ENCODE measurements at regions of chr2 and their contacts with region 1.

Region 1: DNA sequence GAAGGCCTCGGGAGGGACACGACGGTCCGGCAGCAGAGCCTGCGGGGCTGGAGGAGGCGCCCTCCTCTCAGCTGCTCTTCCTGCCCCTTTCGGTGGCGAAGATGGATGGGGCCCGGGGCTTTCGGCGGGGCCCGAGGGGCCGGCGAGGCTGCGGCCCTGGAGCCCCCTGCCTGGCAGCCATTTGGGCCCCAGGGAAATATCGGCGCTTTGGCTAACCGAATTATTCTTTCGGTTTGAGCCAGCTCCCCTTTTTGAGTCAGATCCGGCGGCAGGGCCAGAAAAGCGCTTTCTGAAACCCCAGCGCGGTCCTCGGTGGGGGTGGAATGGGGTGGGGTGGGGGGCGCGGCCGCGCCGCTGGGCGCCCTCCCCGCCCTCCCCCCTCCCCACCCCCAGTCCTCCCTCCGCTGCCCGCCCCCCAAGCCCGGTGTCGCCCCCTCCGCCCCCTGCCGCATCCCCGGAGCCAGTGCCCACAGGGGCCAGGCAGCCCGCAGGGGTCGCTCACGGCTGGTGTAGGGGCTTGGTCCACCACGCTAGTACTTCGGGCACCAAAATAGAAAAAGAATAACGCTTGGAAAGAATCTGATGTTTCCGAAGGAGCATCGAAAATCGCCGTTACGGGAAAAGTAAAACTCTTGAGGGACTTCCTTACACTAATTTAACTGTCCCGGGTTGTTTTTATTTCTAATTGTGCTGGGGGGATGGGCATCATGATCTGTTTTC is 9.1 kb upstream of the ARID5A start:
- DNase-seq: no peak
- ATAC-seq: peak; percentile 67
- H3K4me3 ChIP-seq: peak overlapping the region; percentile 39
- H3K27ac ChIP-seq: peak overlapping the region; percentile 97
- H3K4me1 ChIP-seq: peaks cover 88% of the 10 kb centered on the region
- H3K27me3 ChIP-seq: no peaks in the 10 kb centered on the region
- CTCF ChIP-seq: peak in 2 of 3 experiments; percentile 28 to 32; a peak in 3 of 6 replicates
- EP300 ChIP-seq: peak; percentile 65 to 70; a peak in 3 of 4 replicates
- POLR2A ChIP-seq: peak; percentile 73
- RAD21 ChIP-seq: peak; percentile 34; the same call in 1 of the 2 replicates

Region 2: DNA sequence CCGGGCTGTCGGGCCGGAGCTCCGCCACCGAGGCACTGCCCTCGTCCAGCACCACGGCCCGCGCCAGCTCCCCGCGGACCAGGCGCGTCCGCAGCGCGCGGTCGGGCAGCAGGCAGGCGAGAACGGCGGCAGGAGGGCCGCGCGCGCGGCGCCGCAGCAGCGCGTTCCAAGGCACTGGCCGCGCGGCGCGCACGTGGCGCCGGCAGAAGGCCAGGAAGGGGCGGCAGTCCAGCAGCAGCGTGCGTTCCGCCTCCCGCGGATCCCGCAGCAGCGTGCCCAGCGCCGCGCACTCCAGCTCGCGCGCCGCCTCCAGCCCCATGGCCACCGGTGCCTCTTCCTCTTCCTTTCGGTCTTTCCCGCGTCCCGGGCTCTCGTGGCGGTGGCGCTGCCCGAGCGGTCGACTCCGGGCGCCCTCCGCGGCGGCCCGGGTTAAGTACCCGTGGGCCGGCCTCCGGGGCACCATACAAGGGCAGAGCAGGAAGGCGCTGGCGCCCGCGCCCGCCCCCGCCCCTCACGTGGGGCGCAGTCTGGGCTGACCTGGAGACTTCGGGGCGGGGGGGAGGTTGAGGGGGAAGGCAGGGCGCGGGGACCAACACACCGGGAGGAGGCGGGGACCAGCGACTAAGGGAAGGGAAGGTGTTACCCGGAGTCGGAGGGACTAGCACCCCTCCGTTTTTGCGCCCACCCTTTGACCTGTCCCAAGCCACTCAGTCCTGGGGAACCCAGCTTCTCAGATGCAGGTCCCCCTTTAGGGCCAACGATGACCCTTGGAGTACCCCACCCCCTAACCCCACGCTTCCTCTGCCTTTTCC is 382.2 kb before region 1 on chr2 and contains the start of gene DUSP2:
- CTCF ChIA-PET with region 1: no interaction called
- POLR2A ChIA-PET with region 1: no interaction called
- RAD21 ChIA-PET with region 1: interaction called, 3 read pairs
- SMC1A ChIA-PET with region 1: no interaction called
- in situ Hi-C with region 1: no loop called
- intact Hi-C with region 1: loop called (anchors 5 kb)
- DNase-seq: peak; percentile 85
- ATAC-seq: peak; percentile 62
- H3K4me3 ChIP-seq: peak within 1 kb of the TSS; percentile 92
- H3K27ac ChIP-seq: peak within 1 kb of the TSS; percentile 89
- H3K4me1 ChIP-seq: peaks cover 45% of the 10 kb centered on the region
- H3K27me3 ChIP-seq: no peaks in the 10 kb centered on the region
- CTCF ChIP-seq: no peak
- EP300 ChIP-seq: peak in 1 of 2 experiments; percentile 36; a peak in 3 of 4 replicates
- POLR2A ChIP-seq: no peak
- RAD21 ChIP-seq: 0 out of 2 replicates have a peak, but pooled peaks have one; percentile 22
- polyA plus RNA-seq, gene DUSP2: 9.7 to 34.6 TPM

Region 3: DNA sequence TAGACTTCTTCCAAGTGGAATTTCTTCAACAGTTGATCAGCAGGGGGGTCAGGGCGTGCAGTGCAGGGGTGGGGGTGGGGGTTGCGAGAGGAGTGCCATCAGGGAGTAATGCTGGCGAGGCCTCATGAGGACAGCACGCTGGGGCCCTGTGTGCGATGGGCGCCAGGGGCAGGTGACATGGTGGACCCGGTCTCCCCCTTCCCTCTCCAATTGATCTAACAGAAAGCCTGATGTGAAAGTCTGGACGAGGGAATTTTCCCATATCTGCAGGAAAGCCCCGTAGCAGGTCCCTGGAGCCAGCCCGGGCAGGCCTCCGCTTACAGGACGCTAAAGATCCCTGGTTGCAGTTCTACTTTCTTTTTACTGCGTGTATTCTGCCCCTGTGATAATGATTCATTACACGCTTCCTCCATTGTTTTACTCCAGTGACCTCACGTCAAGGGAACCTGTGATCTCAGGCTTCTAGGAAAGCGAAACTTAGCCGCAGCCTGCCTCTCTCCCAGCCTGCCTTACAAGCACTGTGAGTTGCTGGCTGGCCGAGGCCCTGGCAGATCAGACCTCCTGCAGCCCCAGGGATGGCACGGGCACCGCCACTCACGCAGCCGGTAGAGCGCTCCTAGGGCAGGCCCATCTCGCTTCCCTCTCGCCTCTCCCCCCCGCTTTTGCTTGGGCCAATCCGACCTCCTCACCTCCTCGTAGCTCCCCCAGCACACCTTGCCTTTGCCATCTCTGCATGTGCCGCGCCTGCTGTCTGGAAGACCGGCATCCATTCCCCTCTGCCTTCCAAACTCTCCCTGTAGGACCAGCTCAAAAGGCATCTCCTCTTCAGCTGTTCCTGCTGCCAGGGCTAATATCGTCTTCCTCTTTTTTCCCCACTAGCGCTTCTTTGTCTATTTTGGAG is 41.4 kb before region 1 on chr2:
- CTCF ChIA-PET with region 1: interaction called, 4 read pairs
- POLR2A ChIA-PET with region 1: interaction called, 4 read pairs
- RAD21 ChIA-PET with region 1: interaction called, 3 read pairs
- SMC1A ChIA-PET with region 1: interaction called, 4 read pairs
- in situ Hi-C with region 1: no loop called
- intact Hi-C with region 1: loop called (anchors 2 kb)
- DNase-seq: peak; percentile 97
- ATAC-seq: peak; percentile 92
- H3K4me3 ChIP-seq: peak overlapping the region; percentile 84
- H3K27ac ChIP-seq: peak overlapping the region; percentile 95
- H3K4me1 ChIP-seq: peaks cover 23% of the 10 kb centered on the region
- H3K27me3 ChIP-seq: no peaks in the 10 kb centered on the region
- CTCF ChIP-seq: no peak
- EP300 ChIP-seq: peak; percentile 53 to 91; a peak in 2 of 4 replicates
- POLR2A ChIP-seq: peak; percentile 97
- RAD21 ChIP-seq: no peak

Region 4: GRCh38 chr2:96554293-96555145 is 27.1 kb after region 1 on chr2:
- CTCF ChIA-PET with region 1: interaction called, 22 read pairs
- POLR2A ChIA-PET with region 1: interaction called, 4 read pairs
- RAD21 ChIA-PET with region 1: interaction called, 26 read pairs
- SMC1A ChIA-PET with region 1: interaction called, 4 read pairs
- in situ Hi-C with region 1: no loop called
- intact Hi-C with region 1: no loop called
- DNase-seq: no peak
- ATAC-seq: peak; percentile 79
- H3K4me3 ChIP-seq: no peak overlapping the region
- H3K27ac ChIP-seq: no peak overlapping the region
- H3K4me1 ChIP-seq: no peaks in the 10 kb centered on the region
- H3K27me3 ChIP-seq: no peaks in the 10 kb centered on the region
- CTCF ChIP-seq: peak; percentile 88 to 95 (median 91); a peak in 5 of 6 replicates
- EP300 ChIP-seq: no peak
- POLR2A ChIP-seq: peak; percentile 64
- RAD21 ChIP-seq: peak; percentile 77

Region 5: DNA sequence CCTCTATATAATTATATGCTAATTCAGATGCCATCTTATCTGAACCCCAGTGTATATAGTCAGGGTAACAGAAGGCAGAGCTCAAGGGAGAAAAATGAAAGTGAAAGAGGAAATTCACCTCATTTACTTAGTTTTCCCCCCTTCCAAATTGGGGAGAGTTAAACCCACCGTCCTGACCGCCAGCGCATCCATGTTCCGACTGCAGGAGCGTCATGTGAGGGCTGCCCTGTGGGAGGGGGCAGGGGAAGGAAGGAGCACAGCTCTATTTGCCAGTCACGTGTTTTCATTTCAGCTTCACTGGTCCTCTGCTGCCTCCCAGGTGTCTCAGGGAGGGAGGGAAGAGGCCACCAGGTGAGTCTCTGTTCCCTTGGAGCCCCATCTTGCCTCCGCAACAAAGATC is 246.5 kb after region 1 on chr2:
- CTCF ChIA-PET with region 1: interaction called, 3 read pairs
- POLR2A ChIA-PET with region 1: no interaction called
- RAD21 ChIA-PET with region 1: interaction called, 11 read pairs
- SMC1A ChIA-PET with region 1: interaction called, 3 read pairs
- in situ Hi-C with region 1: no loop called
- intact Hi-C with region 1: loop called (anchors 10 kb)
- DNase-seq: no peak
- ATAC-seq: peak; percentile 66
- H3K4me3 ChIP-seq: peak overlapping the region; percentile 54
- H3K27ac ChIP-seq: peak overlapping the region; percentile 71
- H3K4me1 ChIP-seq: peaks cover 52% of the 10 kb centered on the region
- H3K27me3 ChIP-seq: no peaks in the 10 kb centered on the region
- CTCF ChIP-seq: no peak; a peak in 1 of 6 replicates
- EP300 ChIP-seq: no peak
- POLR2A ChIP-seq: peak; percentile 25; the same call in 1 of the 2 replicates
- RAD21 ChIP-seq: no peak